MCF 10A (cell line): ENCODE measurements at regions of chr1 and their contacts with region 1.

Region 1: GRCh38 chr1:63537940-63538339 is 14.6 kb downstream of the EFCAB7 start:
- DNase-seq: no peak
- H3K4me3 Mint-ChIP-seq: no peak overlapping the region
- H3K27ac Mint-ChIP-seq: no peak overlapping the region
- H3K4me1 Mint-ChIP-seq: no peaks in the 10 kb centered on the region
- H3K27me3 Mint-ChIP-seq: no peaks in the 10 kb centered on the region
- CTCF ChIP-seq: peak; percentile 46

Region 2: DNA sequence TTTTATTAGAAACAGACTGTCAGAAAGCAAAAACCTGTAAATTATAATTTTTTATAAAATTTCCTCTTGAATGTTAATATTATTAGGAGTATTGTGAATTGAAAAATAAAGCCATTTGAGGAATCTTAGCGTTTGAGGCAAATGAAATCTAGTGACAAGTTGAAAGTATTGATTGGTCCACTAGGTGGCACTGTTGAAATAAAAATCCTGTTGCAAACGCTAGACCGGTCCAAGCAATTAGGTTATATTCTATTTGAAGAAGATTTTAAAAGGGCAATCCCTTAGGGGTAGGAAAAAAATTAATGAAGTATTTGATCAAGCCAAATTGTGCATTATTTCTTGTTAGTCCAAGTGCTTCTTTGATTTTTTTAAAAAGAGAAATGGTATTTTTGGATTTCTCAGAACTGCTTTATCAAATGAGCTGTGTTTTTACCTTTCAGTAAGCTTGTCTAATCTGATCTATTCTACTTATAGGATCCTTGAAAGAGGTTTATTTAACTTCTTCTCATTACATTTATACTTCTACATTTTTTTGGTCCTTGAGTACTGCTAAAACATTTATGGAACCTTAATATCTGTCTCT is 696.3 kb before region 1 on chr1:
- CTCF ChIA-PET with region 1: interaction called, 19 read pairs
- POLR2A ChIA-PET with region 1: no interaction called
- intact Hi-C with region 1: loop called (anchors 2 kb)
- DNase-seq: peak; percentile 69
- H3K4me3 Mint-ChIP-seq: no peak overlapping the region
- H3K27ac Mint-ChIP-seq: no peak overlapping the region
- H3K4me1 Mint-ChIP-seq: no peaks in the 10 kb centered on the region
- H3K27me3 Mint-ChIP-seq: no peaks in the 10 kb centered on the region
- CTCF ChIP-seq: peak; percentile 47

Region 3: DNA sequence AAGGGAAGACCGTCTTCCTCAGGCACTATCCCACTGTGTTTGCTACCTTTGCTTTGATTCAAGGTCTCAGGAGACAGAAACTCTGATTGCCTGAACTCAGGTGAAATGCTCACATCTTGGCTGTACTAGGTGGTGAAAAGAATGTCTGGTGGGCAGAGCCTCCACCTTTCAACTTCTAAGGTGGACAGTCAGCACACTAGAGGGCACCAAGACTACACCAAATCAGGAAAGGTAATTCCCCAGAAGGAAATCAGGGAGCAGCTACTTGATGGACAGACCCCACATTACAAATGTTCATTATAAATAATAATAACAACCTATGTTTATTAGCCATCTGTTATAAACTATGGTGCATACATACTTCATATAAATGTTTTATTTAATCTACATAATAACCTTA is 533.1 kb before region 1 on chr1:
- CTCF ChIA-PET with region 1: interaction called, 8 read pairs
- POLR2A ChIA-PET with region 1: no interaction called
- intact Hi-C with region 1: loop called (anchors 5 kb)
- DNase-seq: peak; percentile 43
- H3K4me3 Mint-ChIP-seq: no peak overlapping the region
- H3K27ac Mint-ChIP-seq: no peak overlapping the region
- H3K4me1 Mint-ChIP-seq: no peaks in the 10 kb centered on the region
- H3K27me3 Mint-ChIP-seq: peaks cover 33% of the 10 kb centered on the region
- CTCF ChIP-seq: peak; percentile 23

Region 4: DNA sequence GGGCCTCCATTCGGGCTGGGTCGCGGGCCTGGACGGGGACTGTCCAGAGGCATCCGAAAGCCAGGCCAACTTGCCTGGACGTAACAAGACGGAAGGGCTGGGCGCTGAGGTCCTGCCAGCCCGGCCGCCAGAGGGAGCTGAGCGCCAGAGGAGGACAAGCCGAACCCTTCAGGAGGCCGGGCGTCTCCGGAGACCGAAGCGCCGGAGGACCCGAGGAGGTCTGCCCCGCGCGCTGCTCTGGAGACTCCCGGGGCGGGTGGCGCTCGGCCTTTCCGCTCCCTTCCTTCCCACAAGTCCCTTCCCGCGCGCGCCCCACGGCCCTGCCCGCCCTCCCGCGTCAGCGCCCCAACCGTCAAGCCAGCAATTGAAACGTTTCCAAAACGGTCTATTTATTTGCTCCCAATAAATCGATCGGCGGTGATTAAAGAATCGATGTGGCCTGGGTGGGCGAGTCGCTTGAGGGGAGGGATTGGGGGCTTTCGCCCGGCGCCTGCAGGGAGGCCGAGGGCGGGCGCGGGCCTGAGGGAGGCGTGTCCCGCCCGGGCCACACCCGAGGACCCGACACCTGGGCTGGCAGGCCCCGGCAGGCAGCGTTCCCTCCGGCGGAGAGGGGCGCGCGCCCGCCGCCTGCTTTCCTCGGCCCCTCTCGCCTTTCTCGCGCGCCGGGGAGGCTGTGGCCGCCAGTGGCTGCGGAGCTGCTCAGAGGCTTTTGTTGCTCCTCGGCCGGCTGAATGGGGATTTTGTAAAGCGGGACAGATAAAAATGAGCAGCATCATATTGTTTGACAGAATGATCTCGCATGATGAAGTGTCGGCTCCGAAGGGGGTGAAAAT is 220.7 kb before region 1 on chr1:
- CTCF ChIA-PET with region 1: interaction called, 7 read pairs
- POLR2A ChIA-PET with region 1: no interaction called
- intact Hi-C with region 1: loop called (anchors 5 kb)
- DNase-seq: peak; percentile 65
- H3K4me3 Mint-ChIP-seq: peak overlapping the region; percentile 52
- H3K27ac Mint-ChIP-seq: no peak overlapping the region
- H3K4me1 Mint-ChIP-seq: no peaks in the 10 kb centered on the region
- H3K27me3 Mint-ChIP-seq: no peaks in the 10 kb centered on the region
- CTCF ChIP-seq: peak; percentile 57

Region 5: DNA sequence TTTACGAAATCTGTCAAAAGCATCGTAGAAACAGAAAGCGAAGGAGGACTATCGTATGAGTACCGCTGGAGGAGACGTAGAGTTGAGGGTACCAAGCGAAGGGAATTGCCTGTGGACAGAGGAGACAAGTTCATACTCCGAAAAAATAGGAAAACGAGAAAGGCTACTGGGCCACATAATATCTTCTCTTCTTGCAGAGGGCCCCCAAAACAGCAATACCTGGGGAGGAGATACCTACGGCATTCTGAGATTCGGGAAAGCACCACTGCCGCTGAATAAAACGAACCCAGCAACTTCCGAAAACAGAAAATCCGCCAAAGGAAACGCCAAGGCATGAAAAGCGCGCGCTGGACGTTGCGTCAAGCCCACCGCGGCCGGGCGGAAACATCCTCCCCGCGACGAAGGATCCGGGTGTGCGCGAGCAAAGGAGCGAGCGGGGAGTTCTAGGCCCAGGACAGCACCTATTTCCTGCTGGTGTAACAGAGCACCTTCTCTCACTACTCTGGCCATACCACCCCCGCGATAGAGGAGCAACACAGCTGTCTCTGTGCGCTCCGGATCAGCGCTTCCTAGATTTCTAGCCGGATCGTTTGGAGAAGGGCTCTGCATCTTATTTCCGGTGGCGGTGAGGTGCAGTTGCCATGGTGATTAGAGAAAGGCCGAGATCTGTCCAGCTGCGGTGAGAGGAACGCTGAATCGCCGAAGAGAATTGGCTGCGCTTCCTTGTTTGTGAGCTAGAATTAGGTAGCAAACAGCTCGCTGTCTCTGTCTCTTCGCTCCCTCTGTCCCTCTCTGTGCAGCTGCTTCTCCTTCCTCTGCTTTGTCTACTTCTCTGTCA is 14.8 kb before region 1 on chr1 and contains the starts of genes EFCAB7 and ITGB3BP:
- CTCF ChIA-PET with region 1: interaction called, 19 read pairs
- POLR2A ChIA-PET with region 1: interaction called, 18 read pairs
- intact Hi-C with region 1: no loop called
- DNase-seq: peak; percentile 95
- H3K4me3 Mint-ChIP-seq: peak within 1 kb of the TSS; percentile 93
- H3K27ac Mint-ChIP-seq: peak within 1 kb of the TSS; percentile 94
- H3K4me1 Mint-ChIP-seq: peaks cover 26% of the 10 kb centered on the region
- H3K27me3 Mint-ChIP-seq: no peaks in the 10 kb centered on the region
- CTCF ChIP-seq: no peak
- total RNA-seq, gene EFCAB7: 7.6 and 7.9 TPM in 2 replicates
- total RNA-seq, gene ITGB3BP: 31.4 and 31.8 TPM in 2 replicates

Region 6: DNA sequence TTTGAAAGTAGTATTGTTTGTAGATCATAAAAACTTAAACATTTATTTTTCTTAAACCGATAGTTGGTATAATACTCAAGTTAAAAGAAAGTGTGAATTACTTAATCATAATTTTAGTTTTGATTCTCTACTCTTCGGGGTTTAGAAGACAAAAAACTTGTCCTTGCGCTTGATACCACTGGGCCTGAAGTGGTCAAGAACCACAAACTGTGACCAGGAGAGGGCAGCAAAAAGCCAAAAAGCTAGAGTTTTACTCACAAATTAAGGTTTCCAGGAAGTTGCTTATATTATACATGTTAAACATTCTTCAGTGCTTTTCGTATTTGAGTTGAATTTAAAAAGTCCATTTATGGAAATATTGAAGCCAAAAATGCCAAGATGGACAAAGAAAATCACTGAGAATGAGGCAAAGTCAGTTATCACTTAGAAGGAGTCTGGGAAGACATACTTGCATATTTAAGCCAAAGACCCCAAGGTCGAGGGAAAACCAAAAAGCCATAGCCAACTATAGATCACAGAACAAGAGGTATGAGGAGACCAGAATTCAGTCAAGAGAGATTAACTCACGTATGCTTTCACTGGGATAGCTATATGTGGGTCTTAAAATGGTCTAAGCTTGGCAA is 19.5 kb after region 1 on chr1:
- CTCF ChIA-PET with region 1: interaction called, 12 read pairs
- POLR2A ChIA-PET with region 1: interaction called, 4 read pairs
- intact Hi-C with region 1: no loop called
- DNase-seq: peak; percentile 51
- H3K4me3 Mint-ChIP-seq: no peak overlapping the region
- H3K27ac Mint-ChIP-seq: no peak overlapping the region
- H3K4me1 Mint-ChIP-seq: peaks cover 5% of the 10 kb centered on the region
- H3K27me3 Mint-ChIP-seq: no peaks in the 10 kb centered on the region
- CTCF ChIP-seq: peak; percentile 52